Calu3 (cell line): ENCODE measurements at regions of chr1 and their contacts with region 1.

Region 1: DNA sequence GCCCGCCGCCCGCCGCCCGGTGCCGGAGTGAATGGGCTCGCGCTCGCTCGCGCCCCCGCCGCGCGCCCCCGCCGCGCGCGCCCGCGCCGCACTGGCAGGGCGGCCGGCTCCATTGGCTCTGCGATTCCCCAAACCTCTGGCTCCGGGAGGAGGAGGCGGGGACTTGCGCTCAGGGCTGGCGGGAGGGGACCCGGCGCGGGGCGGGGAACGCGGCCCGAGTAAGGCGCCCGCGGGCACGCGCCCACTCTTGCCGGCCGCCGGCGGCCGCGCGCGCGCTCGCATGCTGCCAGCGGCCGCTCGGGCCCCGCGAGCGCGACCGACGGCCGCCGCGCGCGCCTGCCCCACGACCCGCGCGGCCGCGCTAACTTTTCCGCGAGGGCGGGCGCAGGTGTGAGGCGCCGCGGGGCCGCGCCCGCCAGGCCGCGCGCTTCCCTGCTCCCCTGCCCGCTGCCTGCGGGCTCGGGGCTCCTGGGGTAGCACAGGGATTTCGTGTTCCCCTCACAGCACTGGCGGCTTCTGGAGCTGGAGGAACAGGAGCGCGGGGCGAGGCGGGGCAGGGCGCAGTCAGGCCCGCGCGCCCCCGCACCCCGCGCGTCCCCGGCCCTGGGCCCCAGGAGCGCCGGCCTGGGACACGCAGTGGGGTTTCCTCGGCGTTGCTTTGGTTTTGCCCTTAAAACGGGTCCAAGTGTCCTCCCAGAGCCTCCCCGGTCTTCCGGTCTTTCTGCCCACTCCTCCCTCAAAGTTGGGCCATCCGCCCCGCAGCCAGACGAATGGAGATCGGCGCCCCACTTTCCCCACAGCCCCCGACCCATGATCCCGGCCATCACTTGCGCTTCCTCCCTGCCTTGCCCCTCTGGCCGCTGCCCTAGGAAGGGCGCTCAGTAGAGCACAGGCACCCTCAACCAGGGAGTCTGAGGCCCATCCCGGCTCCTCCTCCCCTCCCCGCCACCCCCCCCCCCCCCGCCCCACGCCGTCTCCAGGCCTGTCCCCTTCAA is 101.5 kb downstream of the CASZ1 start:
- DNase-seq: peak; percentile 89
- H3K4me3 Mint-ChIP-seq: peak overlapping the region; percentile 67
- H3K27ac Mint-ChIP-seq: peak overlapping the region; percentile 27
- H3K4me1 Mint-ChIP-seq: peaks cover 36% of the 10 kb centered on the region
- H3K27me3 Mint-ChIP-seq: no peaks in the 10 kb centered on the region
- CTCF ChIP-seq: no peak

Region 2: GRCh38 chr1:10788592-10789006 is 93.7 kb after region 1 on chr1:
- CTCF ChIA-PET with region 1: interaction called, 8 read pairs
- intact Hi-C with region 1: loop called (anchors 2 kb)
- DNase-seq: peak; percentile 55
- H3K4me3 Mint-ChIP-seq: no peak overlapping the region
- H3K27ac Mint-ChIP-seq: no peak overlapping the region
- H3K4me1 Mint-ChIP-seq: no peaks in the 10 kb centered on the region
- H3K27me3 Mint-ChIP-seq: no peaks in the 10 kb centered on the region
- CTCF ChIP-seq: no peak

Region 3: GRCh38 chr1:10803971-10804820 is 109.3 kb after region 1 on chr1:
- CTCF ChIA-PET with region 1: no interaction called
- intact Hi-C with region 1: no loop called
- DNase-seq: peak; percentile 65
- H3K4me3 Mint-ChIP-seq: peak overlapping the region; percentile 32
- H3K27ac Mint-ChIP-seq: peak overlapping the region; percentile 72
- H3K4me1 Mint-ChIP-seq: peaks cover 24% of the 10 kb centered on the region
- H3K27me3 Mint-ChIP-seq: peaks cover 57% of the 10 kb centered on the region
- CTCF ChIP-seq: no peak

Region 4: DNA sequence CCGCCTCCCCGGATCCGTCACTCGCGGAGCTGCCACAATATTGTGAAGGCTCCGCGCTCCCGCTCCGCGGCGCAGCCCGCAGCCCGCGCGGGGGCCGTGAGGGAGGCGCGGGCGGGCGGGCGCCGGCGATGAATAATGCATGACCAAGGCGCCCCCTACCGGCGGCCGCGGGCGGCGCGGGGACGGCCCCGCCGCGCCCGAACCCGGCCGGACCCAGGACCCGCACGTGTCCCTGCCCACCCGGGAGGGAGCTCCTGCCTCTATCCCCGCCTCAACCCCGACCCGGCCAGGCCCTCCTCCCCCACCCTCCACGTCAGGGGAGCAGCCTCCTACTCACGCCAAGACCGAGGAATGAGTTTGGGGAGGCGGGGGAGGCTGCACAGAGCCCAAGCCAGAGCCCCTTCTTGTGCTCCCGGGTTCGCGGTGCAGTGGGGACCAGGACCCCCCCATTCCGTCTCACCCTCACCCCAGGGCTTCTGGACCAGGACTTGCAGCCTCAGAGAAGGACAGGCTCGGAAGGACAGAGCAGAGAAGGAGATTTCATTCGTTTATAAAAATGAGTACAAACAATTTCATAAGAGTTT is 172.3 kb after region 1 on chr1:
- CTCF ChIA-PET with region 1: no interaction called
- intact Hi-C with region 1: loop called (anchors 5 kb)
- DNase-seq: peak; percentile 66
- H3K4me3 Mint-ChIP-seq: peak overlapping the region; percentile 34
- H3K27ac Mint-ChIP-seq: no peak overlapping the region
- H3K4me1 Mint-ChIP-seq: peaks cover 10% of the 10 kb centered on the region
- H3K27me3 Mint-ChIP-seq: peaks cover 58% of the 10 kb centered on the region
- CTCF ChIP-seq: peak; percentile 55